BJ (cell line): ENCODE measurements at regions of chrX and their contacts with region 1.

Region 1: DNA sequence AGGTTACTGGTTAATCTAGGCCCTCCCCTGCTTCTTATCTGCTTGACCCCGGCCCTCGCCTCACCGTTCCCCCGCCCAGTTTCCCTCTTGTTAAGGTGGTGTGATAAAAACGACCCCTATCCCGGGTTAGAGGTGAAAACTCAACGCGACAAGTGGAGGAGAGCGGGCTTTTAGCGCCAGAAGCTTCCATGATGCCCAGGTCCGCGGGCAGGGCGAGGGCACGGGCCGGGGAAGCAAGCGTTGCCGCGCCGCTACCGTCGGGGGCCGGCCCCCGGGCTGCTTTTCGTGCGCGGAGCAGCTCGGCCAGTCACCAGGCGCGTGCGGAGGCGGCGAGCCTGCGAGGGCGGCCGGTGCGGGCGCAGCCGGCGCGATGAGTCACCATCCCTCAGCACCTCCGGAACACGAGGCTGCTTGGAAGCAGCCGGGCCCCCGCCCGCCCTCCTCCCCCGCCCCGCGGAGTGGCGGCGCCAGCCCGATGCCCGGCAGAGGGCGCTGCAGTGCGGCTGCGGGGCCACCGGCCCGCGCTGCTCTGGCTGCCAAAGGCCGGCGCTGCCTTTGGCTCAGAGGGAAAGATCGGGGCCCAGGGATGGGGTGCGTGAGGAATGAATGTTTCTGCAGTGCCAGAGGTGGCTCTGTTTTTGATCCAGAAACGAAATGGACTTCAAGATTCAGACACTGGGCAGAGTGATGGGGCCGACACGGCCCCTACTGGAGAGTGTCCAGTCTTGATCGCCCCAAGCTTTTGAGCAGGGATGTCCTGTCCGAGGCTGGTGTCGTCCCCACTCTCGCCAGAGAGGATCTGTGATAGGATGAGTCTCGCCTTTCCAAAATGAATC is 107.8 kb downstream of the NHSL2 start:
- DNase-seq: peak; percentile 40
- H3K4me3 ChIP-seq: peak overlapping the region; percentile 21; the same call in 1 of the 2 replicates
- H3K27me3 ChIP-seq: no peaks in the 10 kb centered on the region
- CTCF ChIP-seq: peak; percentile 38

Region 2: DNA sequence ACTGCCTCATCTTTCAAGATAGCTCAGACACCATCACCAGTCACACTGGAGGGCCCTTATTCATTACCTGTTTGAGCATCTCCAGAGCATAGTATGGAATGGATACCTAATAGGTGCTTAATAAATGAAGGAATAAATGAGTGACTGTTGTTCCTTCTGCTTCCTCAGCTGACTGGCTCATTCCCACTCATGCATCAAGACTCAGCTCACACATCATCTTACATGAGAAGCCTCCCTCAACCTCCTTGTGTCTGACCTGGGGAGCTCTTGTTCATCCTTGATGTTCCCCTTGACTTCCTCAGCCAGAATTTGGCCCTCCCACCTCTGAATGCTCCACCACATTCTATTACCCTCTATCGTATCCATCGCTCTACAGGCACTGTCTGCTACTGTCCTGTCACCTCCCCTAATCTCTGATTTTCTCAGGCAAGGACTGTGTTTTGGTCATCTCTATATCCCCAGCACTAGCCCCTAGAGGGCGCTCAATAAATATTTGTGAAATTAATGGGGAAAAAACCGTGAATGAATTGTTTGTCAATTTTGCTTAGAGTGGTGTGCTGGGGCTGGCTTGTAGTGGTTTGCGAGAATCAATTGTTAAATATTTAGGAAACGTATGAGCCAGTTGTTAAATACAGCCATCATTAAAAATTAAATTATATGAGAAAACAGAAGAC is 19.5 kb before region 1 on chrX:
- CTCF ChIA-PET with region 1: interaction called, 33 read pairs
- POLR2A ChIA-PET with region 1: no interaction called
- DNase-seq: no peak
- H3K4me3 ChIP-seq: no peak overlapping the region
- H3K27me3 ChIP-seq: no peaks in the 10 kb centered on the region
- CTCF ChIP-seq: peak; percentile 57

Region 3: DNA sequence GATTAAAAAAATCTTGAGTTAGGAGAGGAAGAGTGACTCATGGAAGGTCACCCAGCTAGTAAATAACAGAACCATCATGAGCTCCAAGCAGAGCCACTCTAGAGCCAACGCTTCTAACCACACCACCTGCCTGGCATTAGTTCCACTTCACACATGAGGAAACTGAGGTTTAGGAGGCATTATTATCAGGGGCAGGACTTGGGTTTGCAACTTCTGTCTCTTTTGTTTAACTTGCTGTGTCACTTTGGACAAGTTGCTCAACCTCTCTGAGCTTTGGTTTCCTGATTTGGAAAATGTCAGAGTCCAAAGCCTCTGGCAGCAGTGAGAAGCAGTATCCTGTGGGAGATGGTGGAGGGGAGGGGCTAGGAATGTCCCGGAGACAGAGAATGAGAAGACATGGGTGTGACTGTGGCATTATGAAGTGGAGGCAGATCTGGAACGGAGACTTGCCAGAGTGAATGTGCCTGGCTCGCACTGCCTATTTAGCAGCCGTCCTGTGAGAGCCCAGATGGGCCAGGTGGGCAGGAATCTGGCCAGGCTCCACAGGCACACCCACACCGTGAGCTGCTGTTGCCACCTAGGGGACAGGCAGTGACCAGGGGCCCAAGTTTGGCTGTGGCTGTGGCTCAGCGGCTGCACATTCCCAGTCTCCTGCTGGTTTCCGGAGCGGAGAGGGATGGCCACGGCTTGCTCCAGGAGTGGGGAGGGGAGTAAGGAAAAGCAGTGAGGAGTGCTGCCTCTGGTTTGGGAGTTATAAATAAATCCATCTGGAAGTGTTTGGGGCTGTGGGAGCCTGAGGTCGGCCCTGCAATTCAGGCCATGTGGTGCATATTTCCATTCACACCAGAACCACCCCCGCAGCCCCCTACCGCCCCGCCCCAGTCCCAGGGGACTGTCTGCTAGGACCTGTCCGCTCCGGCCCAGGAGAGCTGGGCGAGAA is 14.4 kb before region 1 on chrX:
- CTCF ChIA-PET with region 1: interaction called, 33 read pairs
- POLR2A ChIA-PET with region 1: no interaction called
- DNase-seq: peak; percentile 27
- H3K4me3 ChIP-seq: no peak overlapping the region
- H3K27me3 ChIP-seq: no peaks in the 10 kb centered on the region; the same call in 1 of the 2 replicates
- CTCF ChIP-seq: peak; percentile 34; the same call in 1 of the 2 replicates

Region 4: DNA sequence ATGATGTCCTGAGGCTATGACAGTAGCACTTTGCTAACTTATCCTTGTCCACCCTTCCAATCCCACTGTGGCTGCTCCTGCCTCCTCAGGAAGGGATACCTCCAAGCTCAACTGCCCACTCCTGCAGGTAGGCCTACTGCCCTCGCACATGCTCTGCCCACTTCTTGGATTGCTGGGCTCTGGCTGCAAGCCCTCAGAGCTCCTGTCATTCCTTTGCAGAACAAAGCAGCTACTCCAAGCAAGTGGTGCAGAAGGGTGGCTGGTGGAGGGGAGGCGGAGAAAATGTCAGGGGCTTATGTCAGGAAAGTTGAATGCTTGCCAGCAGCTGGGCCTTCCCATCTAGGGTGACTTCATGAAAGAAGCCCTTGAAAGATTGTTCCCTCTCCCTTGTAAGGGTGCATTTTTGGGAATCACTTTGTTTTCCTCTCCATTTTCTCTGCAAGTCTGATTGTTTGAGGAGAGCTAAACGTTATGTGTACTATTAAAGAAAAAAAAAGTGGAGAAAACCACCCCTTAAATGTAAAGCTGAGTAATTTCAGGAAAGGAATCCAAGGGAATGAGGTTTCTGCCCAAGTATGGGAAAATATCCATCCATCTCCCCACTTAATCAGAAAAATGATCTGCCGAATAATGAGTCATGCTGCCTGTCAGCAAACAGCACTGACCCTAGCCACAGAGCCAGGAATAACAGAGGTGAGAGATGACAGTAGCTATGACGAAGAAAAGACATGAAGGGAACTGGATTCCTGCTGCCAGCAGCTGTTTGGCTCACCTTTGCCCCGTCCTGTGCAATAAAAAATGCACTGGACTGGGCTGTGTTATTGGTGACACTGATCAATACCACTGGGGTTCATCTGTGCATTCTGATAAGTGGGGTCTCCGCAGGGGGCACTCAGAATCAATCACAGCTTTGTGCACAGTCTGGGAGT is 11.3 kb after region 1 on chrX:
- CTCF ChIA-PET with region 1: interaction called, 40 read pairs
- POLR2A ChIA-PET with region 1: no interaction called
- DNase-seq: peak; percentile 41
- H3K4me3 ChIP-seq: no peak overlapping the region
- H3K27me3 ChIP-seq: no peaks in the 10 kb centered on the region
- CTCF ChIP-seq: no peak

Region 5: GRCh38 chrX:72126539-72127140 is 108.1 kb after region 1 on chrX:
- CTCF ChIA-PET with region 1: interaction called, 42 read pairs
- POLR2A ChIA-PET with region 1: interaction called, 13 read pairs
- DNase-seq: peak; percentile 44
- H3K4me3 ChIP-seq: no peak overlapping the region
- H3K27me3 ChIP-seq: no peaks in the 10 kb centered on the region
- CTCF ChIP-seq: peak; percentile 78